AG04449 (cell line): ENCODE measurements at regions of chr9 and their contacts with region 1.

Region 1: DNA sequence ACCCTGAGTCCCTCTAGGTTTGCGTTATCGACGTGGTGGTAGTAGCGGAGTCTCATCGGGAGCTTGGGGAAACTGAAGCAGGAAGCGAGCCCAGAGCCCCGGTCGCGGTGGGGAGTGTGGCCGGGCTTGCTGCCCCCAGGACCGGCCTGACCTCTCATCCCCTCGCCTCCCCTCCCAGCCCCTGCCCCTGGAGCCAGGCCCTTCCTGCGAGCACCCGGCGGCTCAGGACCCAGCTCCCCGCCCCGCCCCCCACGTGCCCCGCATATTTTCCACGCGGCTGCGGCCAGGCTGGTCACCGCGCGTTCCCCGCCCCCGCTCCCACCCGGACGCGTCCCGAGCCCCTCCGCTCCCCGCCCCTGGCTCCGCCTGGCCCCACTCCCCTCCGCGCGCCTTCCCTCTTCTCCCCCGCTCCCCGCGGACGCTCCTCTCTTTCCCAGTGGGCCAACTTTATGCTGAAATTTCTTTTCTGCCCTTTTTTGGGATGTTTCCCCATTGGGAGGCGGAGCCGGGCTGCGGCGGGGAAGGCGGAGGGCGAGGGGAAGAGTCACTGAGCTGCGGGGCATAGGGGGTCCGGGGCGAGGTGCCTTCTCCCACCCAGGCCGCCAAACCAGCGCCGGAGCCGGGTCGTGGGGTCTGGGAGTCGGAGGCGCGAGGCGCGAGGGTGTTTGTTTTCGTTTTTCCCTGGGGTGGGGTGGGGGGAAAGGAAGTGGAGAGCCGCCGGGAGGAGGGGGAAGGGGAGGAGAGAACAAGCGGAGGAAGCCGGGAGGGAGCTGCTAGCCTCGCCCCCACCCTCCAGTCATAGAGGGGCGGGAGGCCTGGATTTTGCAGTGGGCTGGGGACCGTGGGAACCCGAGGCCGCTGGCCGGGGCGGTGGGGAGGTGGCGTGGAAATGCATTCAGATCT is 957 bp upstream of the TPM2 start:
- DNase-seq: no peak
- H3K4me3 ChIP-seq: peak overlapping the region; percentile 97
- CTCF ChIP-seq: no peak

Region 2: GRCh38 chr9:35333551-35333950 is 357.1 kb before region 1 on chr9:
- CTCF ChIA-PET with region 1: no interaction called
- POLR2A ChIA-PET with region 1: no interaction called
- DNase-seq: no peak
- H3K4me3 ChIP-seq: no peak overlapping the region
- CTCF ChIP-seq: no peak

Region 3: GRCh38 chr9:35495984-35496383 is 194.7 kb before region 1 on chr9:
- CTCF ChIA-PET with region 1: no interaction called
- POLR2A ChIA-PET with region 1: no interaction called
- DNase-seq: no peak
- H3K4me3 ChIP-seq: no peak overlapping the region
- CTCF ChIP-seq: no peak

Region 4: GRCh38 chr9:35664531-35665470 is 25.9 kb before region 1 on chr9 and contains the start of gene ARHGEF39:
- CTCF ChIA-PET with region 1: interaction called, 54 read pairs
- POLR2A ChIA-PET with region 1: interaction called, 23 read pairs
- DNase-seq: no peak
- H3K4me3 ChIP-seq: peak within 1 kb of the TSS; percentile 71
- CTCF ChIP-seq: peak; percentile 31

Region 5: GRCh38 chr9:35675732-35676392 is 14.8 kb before region 1 on chr9:
- CTCF ChIA-PET with region 1: interaction called, 16 read pairs
- POLR2A ChIA-PET with region 1: interaction called, 68 read pairs
- DNase-seq: no peak
- H3K4me3 ChIP-seq: peak overlapping the region; percentile 56
- CTCF ChIP-seq: peak; percentile 37

Region 6: DNA sequence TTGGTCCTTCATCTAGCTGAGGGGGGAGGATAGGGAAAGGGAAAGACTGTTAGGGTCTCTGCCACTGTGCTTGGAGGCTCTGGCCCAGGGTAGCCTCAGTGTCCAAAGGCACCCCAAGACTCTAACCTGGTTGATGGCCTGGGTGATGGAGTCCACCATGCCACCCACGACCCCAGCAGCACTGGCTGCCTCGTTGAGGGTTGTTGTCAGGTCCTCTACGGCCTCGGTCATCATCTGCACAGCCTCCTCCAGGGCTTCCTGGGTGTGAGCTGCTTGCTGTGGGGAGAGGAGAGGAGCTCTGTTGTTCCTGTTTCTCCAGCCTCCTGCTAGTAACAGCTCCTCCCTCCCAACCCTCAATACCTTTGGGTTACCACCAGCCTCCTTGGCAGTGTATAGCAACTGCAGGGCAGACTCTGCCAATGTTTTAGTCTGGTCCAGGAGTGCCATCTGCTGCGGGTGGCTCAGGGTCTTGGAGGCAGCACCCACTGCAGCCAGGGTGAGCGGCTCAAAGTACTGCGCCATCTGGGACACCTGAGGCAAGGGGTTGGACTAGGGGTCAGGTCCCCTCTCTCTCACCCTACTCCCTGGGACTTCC is 15.3 kb after region 1 on chr9:
- CTCF ChIA-PET with region 1: interaction called, 816 read pairs
- POLR2A ChIA-PET with region 1: interaction called, 27 read pairs
- DNase-seq: no peak
- H3K4me3 ChIP-seq: no peak overlapping the region
- CTCF ChIP-seq: no peak